ENCODE measurements at regions of chr22 and their contacts with region 1.

Region 1: GRCh38 chr22:21666786-21667185 is 974 bp downstream of the PPIL2 start:
- DNase-seq: no peak
- H3K4me3 ChIP-seq: peak overlapping the region; percentile 81
- H3K27ac ChIP-seq: peak overlapping the region; percentile 38 to 86
- H3K4me1 ChIP-seq: no peaks in the 10 kb centered on the region
- H3K27me3 ChIP-seq: no peaks in the 10 kb centered on the region
- CTCF ChIP-seq: no peak
- EP300 ChIP-seq: no peak
- POLR2A ChIP-seq: no peak

Region 2: DNA sequence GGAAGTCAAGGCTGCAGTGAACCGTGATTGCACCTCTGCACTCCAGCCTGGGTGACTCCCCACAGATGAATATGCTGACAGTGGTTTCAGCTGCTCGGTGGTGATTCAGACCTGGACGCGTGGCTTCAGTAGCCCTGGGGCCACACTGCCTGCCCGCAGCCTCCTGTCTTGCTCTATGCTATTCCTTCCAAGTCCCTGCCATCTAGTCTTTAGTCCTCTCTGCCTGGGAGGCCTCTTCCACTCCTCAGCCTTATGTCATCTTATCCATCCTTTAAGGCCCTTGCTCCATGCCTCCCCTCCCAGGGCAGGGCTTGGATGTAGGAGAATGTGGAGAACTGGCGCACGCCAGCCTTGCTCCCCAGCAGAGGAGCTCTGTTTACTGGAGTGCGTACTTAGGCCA is 60.0 kb before region 1 on chr22:
- intact Hi-C with region 1: loop called in 1 of 4 experiments (anchors 10 kb)
- DNase-seq: no peak
- H3K4me3 ChIP-seq: no peak overlapping the region
- H3K27ac ChIP-seq: no peak overlapping the region
- H3K4me1 ChIP-seq: peaks cover 5% of the 10 kb centered on the region
- H3K27me3 ChIP-seq: no peaks in the 10 kb centered on the region
- CTCF ChIP-seq: no peak
- EP300 ChIP-seq: no peak
- POLR2A ChIP-seq: no peak

Region 3: DNA sequence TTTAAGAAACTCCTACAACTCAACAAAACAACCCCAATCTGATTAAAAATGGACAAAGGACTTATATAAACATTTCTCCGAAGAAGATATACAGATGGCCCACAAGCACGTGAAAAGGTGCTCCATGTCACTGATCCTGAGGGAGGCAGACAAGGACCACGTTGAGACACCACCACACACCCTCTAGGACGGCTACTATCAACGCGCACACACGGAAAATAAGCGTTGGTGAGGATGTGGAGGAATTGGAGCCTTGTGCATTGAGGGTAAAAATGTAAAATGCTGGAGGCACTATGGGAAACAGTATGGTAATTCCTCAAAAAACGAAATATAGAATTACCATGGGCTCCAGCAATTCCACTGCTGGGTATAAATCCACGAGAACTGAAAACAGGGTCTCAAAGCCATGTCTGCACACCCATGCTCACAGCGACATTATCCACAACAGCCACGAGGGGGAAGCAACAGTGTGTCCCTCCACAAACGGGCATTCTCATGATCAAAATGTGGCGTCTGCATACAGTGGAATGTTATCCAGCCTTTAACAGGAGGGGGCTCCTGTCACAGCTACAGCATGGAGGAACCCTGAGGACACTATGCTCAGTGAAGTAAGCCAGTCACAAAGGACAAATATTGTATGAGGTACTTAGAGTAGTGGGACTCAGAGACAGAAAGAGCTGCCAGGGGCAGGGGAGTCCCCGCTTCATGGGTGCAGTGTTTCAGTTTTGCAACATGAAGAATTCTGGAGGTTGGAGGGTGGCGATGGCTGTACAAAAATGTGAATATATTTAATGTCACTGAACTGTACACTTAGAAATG is 46.3 kb after region 1 on chr22:
- intact Hi-C with region 1: no loop called
- DNase-seq: peak; percentile 65 to 71 (median 71)
- H3K4me3 ChIP-seq: no peak overlapping the region
- H3K27ac ChIP-seq: no peak overlapping the region
- H3K4me1 ChIP-seq: peaks cover 3% of the 10 kb centered on the region
- H3K27me3 ChIP-seq: no peaks in the 10 kb centered on the region
- CTCF ChIP-seq: peak; percentile 56 to 83 (median 77)
- EP300 ChIP-seq: no peak
- POLR2A ChIP-seq: no peak